ENCODE measurements at regions of chr10 and their contacts with region 1.

Region 1: GRCh38 chr10:7818295-7819122 is at the start of gene TAF3:
- DNase-seq: peak; percentile 87 to 94 (median 91)
- ATAC-seq: peak; percentile 99
- H3K4me3 ChIP-seq: peak within 1 kb of the TSS; percentile 90
- H3K4me3 Mint-ChIP-seq: peak within 1 kb of the TSS; percentile 92 to 100 (median 97)
- H3K27ac ChIP-seq: peak within 1 kb of the TSS; percentile 75
- H3K27ac Mint-ChIP-seq: peak within 1 kb of the TSS; percentile 71 to 96 (median 93)
- H3K4me1 ChIP-seq: peaks cover 0 to 6% of the 10 kb centered on the region in 2 donors
- H3K4me1 Mint-ChIP-seq: peaks cover 28 to 56% (median 48%) of the 10 kb centered on the region in 7 donors
- H3K27me3 ChIP-seq: no peaks in the 10 kb centered on the region
- H3K27me3 Mint-ChIP-seq: peaks cover 0 to 34% (median 0%) of the 10 kb centered on the region in 5 donors
- total RNA-seq, gene TAF3: 15.3 to 23.9 (median 18.8) TPM

Region 2: GRCh38 chr10:7787857-7788638 is 30.5 kb before region 1 on chr10 and contains the starts of genes ATP5F1C and KIN:
- CTCF ChIA-PET with region 1: interaction called, 4 read pairs
- POLR2A ChIA-PET with region 1: interaction called, 70 read pairs
- intact Hi-C with region 1: loop called (anchors 1 kb)
- DNase-seq: peak; percentile 93 to 98 (median 96)
- ATAC-seq: peak; percentile 98
- H3K4me3 ChIP-seq: peak within 1 kb of the TSS; percentile 79
- H3K4me3 Mint-ChIP-seq: no peak within 1 kb of the TSS
- H3K27ac ChIP-seq: peak within 1 kb of the TSS; percentile 84
- H3K27ac Mint-ChIP-seq: peak within 1 kb of the TSS in 1 of 9 donors; percentile 90
- H3K4me1 ChIP-seq: peaks cover 21 to 28% of the 10 kb centered on the region in 2 donors
- H3K4me1 Mint-ChIP-seq: peaks cover 47 to 77% (median 57%) of the 10 kb centered on the region in 7 donors
- H3K27me3 ChIP-seq: no peaks in the 10 kb centered on the region
- H3K27me3 Mint-ChIP-seq: no peaks in the 10 kb centered on the region
- total RNA-seq, gene ATP5F1C: 113 to 290 (median 122) TPM
- total RNA-seq, gene KIN: 7.2 to 18.4 (median 14.3) TPM

Region 3: GRCh38 chr10:7980196-7980595 is 161.7 kb after region 1 on chr10:
- CTCF ChIA-PET with region 1: no interaction called
- POLR2A ChIA-PET with region 1: no interaction called
- intact Hi-C with region 1: no loop called
- DNase-seq: no peak
- ATAC-seq: no peak
- H3K4me3 ChIP-seq: no peak overlapping the region
- H3K4me3 Mint-ChIP-seq: no peak overlapping the region
- H3K27ac ChIP-seq: no peak overlapping the region
- H3K27ac Mint-ChIP-seq: peak overlapping the region in 1 of 9 donors; percentile 5
- H3K4me1 ChIP-seq: no peaks in the 10 kb centered on the region
- H3K4me1 Mint-ChIP-seq: peaks cover 0 to 2% (median 0%) of the 10 kb centered on the region in 7 donors
- H3K27me3 ChIP-seq: no peaks in the 10 kb centered on the region
- H3K27me3 Mint-ChIP-seq: no peaks in the 10 kb centered on the region

Measured in naive thymus-derived CD4-positive, alpha-beta T cell (primary cell).